ENCODE measurements at regions of chr15 and their contacts with region 1.

Region 1: GRCh38 chr15:66386204-66387123 is at the start of gene MAP2K1:
- DNase-seq: peak; percentile 97 to 98 (median 98)
- H3K4me3 ChIP-seq: peak within 1 kb of the TSS; percentile 71 to 96
- H3K4me3 Mint-ChIP-seq: peak within 1 kb of the TSS; percentile 95 to 100 (median 98)
- H3K27ac ChIP-seq: peak within 1 kb of the TSS; percentile 83
- H3K27ac Mint-ChIP-seq: peak within 1 kb of the TSS; percentile 78 to 100 (median 99)
- H3K4me1 ChIP-seq: peaks cover 38% of the 10 kb centered on the region
- H3K4me1 Mint-ChIP-seq: peaks cover 38 to 58% (median 48%) of the 10 kb centered on the region in 4 donors
- H3K27me3 ChIP-seq: no peaks in the 10 kb centered on the region
- H3K27me3 Mint-ChIP-seq: no peaks in the 10 kb centered on the region
- total RNA-seq, gene MAP2K1: 54.0 to 54.9 TPM

Region 2: DNA sequence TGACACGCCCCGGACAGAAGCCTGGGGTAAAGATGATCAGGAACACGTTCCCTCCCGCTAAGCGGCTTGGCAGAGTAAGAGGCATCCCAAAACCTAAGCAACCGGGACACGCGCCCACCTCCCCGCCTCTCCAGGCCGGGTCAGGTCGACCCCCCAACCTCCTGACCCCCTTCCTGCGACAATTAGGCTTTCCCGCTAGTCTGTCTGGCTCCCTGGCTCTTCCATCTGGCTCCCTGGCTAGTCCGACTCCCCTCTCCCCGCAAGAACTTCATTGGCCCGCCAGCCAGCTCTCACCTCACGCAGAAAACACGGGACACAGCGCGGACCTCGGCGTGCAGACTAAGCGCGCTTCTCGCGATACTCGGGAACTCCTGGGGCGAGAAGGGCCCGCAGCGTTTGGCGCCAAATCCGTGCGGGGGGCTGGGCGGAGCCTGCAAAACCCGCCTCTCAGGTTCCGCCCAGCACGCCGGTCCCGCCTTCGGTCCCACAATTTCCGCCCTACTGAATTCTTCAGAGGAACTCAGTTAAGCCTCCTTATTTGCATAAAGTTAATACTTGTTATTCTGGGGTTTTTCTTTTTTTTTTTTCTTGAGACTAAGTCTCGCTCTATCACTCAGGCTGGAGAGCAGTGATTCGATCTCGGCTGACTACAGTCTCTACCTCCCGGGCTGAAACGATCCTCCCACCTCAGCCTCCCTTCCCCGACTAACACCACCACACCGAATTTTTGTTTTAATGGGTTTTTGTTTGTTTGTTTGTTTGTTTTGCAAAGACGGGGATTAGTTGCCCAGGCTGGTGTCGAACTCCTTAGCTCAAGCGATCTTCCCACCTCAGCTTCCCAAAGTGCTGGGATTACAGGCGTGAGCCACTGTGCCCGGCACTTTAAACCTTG is 29.9 kb before region 1 on chr15 and contains the start of gene TIPIN:
- CTCF ChIA-PET with region 1: interaction called, 7 read pairs
- POLR2A ChIA-PET with region 1: interaction called, 25 read pairs
- intact Hi-C with region 1: loop called (anchors 1 kb)
- DNase-seq: peak; percentile 95 to 97 (median 96)
- H3K4me3 ChIP-seq: peak within 1 kb of the TSS; percentile 79 to 80
- H3K4me3 Mint-ChIP-seq: peak within 1 kb of the TSS; percentile 91 to 99 (median 98)
- H3K27ac ChIP-seq: peak within 1 kb of the TSS; percentile 66
- H3K27ac Mint-ChIP-seq: peak within 1 kb of the TSS; percentile 90 to 98 (median 97)
- H3K4me1 ChIP-seq: peaks cover 15% of the 10 kb centered on the region
- H3K4me1 Mint-ChIP-seq: peaks cover 15 to 23% (median 19%) of the 10 kb centered on the region in 4 donors
- H3K27me3 ChIP-seq: no peaks in the 10 kb centered on the region
- H3K27me3 Mint-ChIP-seq: no peaks in the 10 kb centered on the region
- total RNA-seq, gene TIPIN: 5.9 to 9.0 TPM

Region 3: DNA sequence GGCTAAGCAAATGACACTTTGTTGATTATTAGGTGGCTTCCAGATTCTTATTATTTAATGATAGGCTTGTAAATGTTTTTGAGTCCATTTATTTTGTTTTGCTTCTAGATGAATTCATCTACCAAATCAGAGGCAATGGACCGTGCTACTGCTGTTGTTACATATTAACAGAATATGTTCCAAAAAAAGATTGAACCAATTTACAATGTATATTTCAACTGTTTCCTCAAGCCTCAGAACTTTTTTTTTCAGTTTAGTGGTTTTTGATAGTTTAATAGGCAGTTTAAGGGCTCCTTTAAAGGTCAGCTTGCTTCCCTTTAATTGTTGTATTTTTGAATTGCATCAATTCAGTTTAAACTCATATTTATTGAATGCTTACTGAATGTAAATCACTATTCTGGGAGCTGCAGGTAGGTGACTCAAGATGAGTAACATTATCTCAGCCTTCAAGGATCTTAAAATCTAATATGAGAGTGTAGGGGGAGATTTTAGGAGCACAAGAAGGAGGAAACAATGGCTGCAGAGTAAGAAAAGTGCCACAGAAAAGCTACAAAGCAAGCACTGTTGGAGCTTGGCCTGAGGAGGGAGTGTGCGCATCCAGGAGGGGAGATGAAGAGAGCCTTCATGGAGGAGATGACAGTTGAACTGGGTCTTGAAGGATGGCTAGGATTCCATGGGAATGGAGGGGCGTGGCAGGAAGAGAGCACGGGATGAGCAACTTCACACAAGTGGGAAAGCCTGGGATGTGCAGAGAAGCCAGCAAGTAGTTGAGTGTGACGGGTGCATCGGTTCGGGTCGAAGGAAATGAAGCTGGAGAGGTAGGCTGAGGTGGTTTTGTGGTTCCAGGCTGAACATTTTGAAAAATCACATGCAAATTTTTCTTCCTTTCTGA is 14.9 kb after region 1 on chr15:
- CTCF ChIA-PET with region 1: interaction called, 44 read pairs
- POLR2A ChIA-PET with region 1: interaction called, 14 read pairs
- intact Hi-C with region 1: no loop called
- DNase-seq: peak in 1 of 5 donors; percentile 26
- H3K4me3 ChIP-seq: peak overlapping the region in 1 of 2 donors; percentile 33
- H3K4me3 Mint-ChIP-seq: peak overlapping the region; percentile 54 to 89 (median 81)
- H3K27ac ChIP-seq: peak overlapping the region; percentile 14
- H3K27ac Mint-ChIP-seq: peak overlapping the region; percentile 49 to 94 (median 83)
- H3K4me1 ChIP-seq: peaks cover 69% of the 10 kb centered on the region
- H3K4me1 Mint-ChIP-seq: peaks cover 48 to 83% (median 66%) of the 10 kb centered on the region in 4 donors
- H3K27me3 ChIP-seq: no peaks in the 10 kb centered on the region
- H3K27me3 Mint-ChIP-seq: no peaks in the 10 kb centered on the region

Region 4: GRCh38 chr15:66429117-66429516 is 42.7 kb after region 1 on chr15:
- CTCF ChIA-PET with region 1: interaction called, 4 read pairs
- POLR2A ChIA-PET with region 1: interaction called, 5 read pairs
- intact Hi-C with region 1: loop called (anchors 5 kb)
- DNase-seq: no peak
- H3K4me3 ChIP-seq: no peak overlapping the region
- H3K4me3 Mint-ChIP-seq: no peak overlapping the region
- H3K27ac ChIP-seq: no peak overlapping the region
- H3K27ac Mint-ChIP-seq: peak overlapping the region in 4 of 7 donors; percentile 6 to 74 (median 46)
- H3K4me1 ChIP-seq: peaks cover 33% of the 10 kb centered on the region
- H3K4me1 Mint-ChIP-seq: peaks cover 51 to 86% (median 65%) of the 10 kb centered on the region in 4 donors
- H3K27me3 ChIP-seq: no peaks in the 10 kb centered on the region
- H3K27me3 Mint-ChIP-seq: no peaks in the 10 kb centered on the region

Region 5: GRCh38 chr15:66497502-66498455 is 111.3 kb after region 1 on chr15 and contains the start of gene SNAPC5:
- CTCF ChIA-PET with region 1: interaction called, 119 read pairs
- POLR2A ChIA-PET with region 1: interaction called, 119 read pairs
- intact Hi-C with region 1: loop called (anchors 1 kb)
- DNase-seq: peak; percentile 96 to 97 (median 96)
- H3K4me3 ChIP-seq: peak within 1 kb of the TSS; percentile 86 to 90
- H3K4me3 Mint-ChIP-seq: peak within 1 kb of the TSS; percentile 95 to 98 (median 97)
- H3K27ac ChIP-seq: peak within 1 kb of the TSS; percentile 89
- H3K27ac Mint-ChIP-seq: peak within 1 kb of the TSS; percentile 96 to 99 (median 99)
- H3K4me1 ChIP-seq: peaks cover 50% of the 10 kb centered on the region
- H3K4me1 Mint-ChIP-seq: peaks cover 30 to 75% (median 50%) of the 10 kb centered on the region in 4 donors
- H3K27me3 ChIP-seq: no peaks in the 10 kb centered on the region
- H3K27me3 Mint-ChIP-seq: no peaks in the 10 kb centered on the region
- total RNA-seq, gene SNAPC5: 32.5 to 36.6 TPM

Measured in CD4-positive, alpha-beta memory T cell (primary cell).